Heart right ventricle (tissue), 16 donors: ENCODE measurements at regions of chr11 and their contacts with region 1.

Region 1: DNA sequence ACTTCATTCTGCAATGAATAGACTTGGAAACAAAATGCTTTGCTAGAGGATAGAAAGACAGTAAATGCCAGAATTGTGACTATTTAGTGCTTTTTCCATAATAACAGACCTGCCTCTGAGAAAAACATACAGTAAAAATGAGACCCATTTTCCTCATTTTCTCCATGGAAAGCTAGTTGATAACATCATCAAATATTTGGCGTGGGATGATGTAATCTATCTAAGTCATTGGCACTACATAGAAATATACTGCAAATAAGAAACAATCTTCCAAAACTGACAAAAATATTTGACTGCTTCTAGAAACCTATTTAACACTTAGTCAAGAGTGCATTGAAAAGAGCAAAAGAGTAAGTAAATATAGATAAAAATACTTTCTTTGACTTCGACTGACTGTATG is 616.0 kb downstream of the DLG2 start:
- DNase-seq: no peak
- ATAC-seq: no peak
- H3K4me3 ChIP-seq: no peak overlapping the region
- H3K27ac ChIP-seq: no peak overlapping the region
- H3K4me1 ChIP-seq: no peaks in the 10 kb centered on the region
- H3K27me3 ChIP-seq: no peaks in the 10 kb centered on the region
- CTCF ChIP-seq: no peak

Region 2: DNA sequence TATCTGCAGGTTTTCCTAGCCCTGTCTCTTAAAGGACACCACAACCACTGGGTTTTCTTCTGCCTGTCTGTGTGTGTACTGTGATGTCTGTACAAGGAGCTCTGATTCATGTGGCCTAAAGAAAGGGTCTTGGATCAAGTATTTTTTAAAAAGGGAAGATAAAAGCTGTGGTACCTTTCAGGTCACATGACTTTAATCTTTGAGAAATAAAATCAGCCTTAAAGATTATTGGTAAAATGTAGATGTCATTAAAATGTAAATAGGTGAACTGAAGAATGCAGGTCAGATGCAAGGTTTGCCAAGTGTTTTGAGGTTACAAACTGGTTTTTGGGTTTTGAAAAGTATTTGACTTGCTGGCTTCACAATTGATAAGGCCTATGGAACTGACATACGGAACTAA is 358.6 kb after region 1 on chr11:
- intact Hi-C with region 1: loop called in 1 of 10 experiments (anchors 5 kb)
- DNase-seq: no peak
- ATAC-seq: no peak
- H3K4me3 ChIP-seq: no peak overlapping the region
- H3K27ac ChIP-seq: no peak overlapping the region
- H3K4me1 ChIP-seq: no peaks in the 10 kb centered on the region
- H3K27me3 ChIP-seq: no peaks in the 10 kb centered on the region
- CTCF ChIP-seq: no peak